ENCODE measurements at regions of chr12 and their contacts with region 1.

Region 1: DNA sequence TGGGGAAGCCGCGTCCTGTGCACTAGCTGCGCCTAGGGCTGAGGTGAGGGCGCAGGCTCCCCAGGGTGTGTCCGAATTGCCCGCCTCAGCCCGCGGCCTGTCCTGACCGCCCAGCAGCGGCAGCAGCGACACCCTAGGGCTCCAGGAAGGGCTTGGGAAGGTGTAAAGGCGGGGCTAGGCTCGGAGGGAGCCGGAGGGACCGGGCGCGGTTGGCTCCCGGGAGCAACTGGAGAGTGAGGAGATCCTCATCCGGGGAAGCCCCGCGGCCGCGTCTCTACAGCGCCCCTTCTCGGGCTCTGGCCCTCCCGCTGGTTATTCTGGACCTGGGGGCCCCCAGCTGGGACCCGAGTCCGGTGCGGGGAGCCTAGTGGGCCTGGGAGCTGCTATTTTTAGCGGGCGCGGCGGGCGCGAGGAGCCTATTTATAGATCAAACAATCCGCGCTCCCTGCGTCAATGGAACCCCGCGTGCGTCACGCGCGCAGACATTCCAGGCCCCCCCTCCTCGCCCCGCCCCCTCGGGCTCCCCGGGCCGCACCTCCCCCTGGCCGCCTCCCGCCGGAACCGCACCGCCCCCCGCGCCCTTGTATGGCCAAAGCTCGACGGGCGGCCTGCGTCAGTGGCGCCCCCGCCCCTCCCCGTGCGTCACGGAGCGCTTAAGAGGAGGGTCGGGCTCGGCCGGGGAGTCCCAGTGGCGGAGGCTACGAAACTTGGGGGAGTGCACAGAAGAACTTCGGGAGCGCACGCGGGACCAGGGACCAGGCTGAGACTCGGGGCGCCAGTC is at the start of gene NR4A1:
- DNase-seq: peak; percentile 70 to 98 (median 95)
- H3K4me3 ChIP-seq: peak within 1 kb of the TSS; percentile 50 to 86 (median 71)
- H3K27ac ChIP-seq: peak within 1 kb of the TSS; percentile 73 to 99 (median 96)
- H3K27me3 ChIP-seq: no peaks in the 10 kb centered on the region
- CTCF ChIP-seq: peak in 51 of 56 donors; percentile 14 to 71 (median 47)
- total RNA-seq, gene NR4A1: 13.1 to 194 (median 28.9) TPM

Region 2: GRCh38 chr12:52069327-52070184 is 18.6 kb after region 1 on chr12 and contains the start of gene ATG101:
- intact Hi-C with region 1: loop called in 1 of 2 experiments (anchors 1 kb)
- DNase-seq: peak; percentile 77 to 93 (median 89)
- H3K4me3 ChIP-seq: peak within 1 kb of the TSS; percentile 67 to 100 (median 93)
- H3K27ac ChIP-seq: peak within 1 kb of the TSS; percentile 72 to 99 (median 95)
- H3K27me3 ChIP-seq: no peaks in the 10 kb centered on the region
- CTCF ChIP-seq: peak; percentile 46 to 94 (median 84)
- total RNA-seq, gene ATG101: 19.6 to 42.5 (median 31.5) TPM